Activated CD8-positive, alpha-beta T cell treated with anti-CD3 and anti-CD28 coated beads, Interleukin-2, amount 10 ng/mL, durations not matched to agents 7 days and 5 days (primary cell): ENCODE measurements at regions of chr10 and their contacts with region 1.

Region 1: GRCh38 chr10:101840741-101841453 is 2.7 kb downstream of the KCNIP2 start:
- DNase-seq: peak; percentile 82
- ATAC-seq: peak; percentile 74
- H3K4me3 Mint-ChIP-seq: peak overlapping the region; percentile 74
- H3K27ac Mint-ChIP-seq: no peak overlapping the region
- H3K4me1 Mint-ChIP-seq: peaks cover 43% of the 10 kb centered on the region
- H3K27me3 Mint-ChIP-seq: peaks cover 17% of the 10 kb centered on the region

Region 2: GRCh38 chr10:100743626-100744135 is 1097.2 kb before region 1 on chr10:
- CTCF ChIA-PET with region 1: no interaction called
- POLR2A ChIA-PET with region 1: no interaction called
- DNase-seq: peak; percentile 68
- ATAC-seq: peak; percentile 66
- H3K4me3 Mint-ChIP-seq: no peak overlapping the region
- H3K27ac Mint-ChIP-seq: no peak overlapping the region
- H3K4me1 Mint-ChIP-seq: peaks cover 26% of the 10 kb centered on the region
- H3K27me3 Mint-ChIP-seq: peaks cover 83% of the 10 kb centered on the region

Region 3: DNA sequence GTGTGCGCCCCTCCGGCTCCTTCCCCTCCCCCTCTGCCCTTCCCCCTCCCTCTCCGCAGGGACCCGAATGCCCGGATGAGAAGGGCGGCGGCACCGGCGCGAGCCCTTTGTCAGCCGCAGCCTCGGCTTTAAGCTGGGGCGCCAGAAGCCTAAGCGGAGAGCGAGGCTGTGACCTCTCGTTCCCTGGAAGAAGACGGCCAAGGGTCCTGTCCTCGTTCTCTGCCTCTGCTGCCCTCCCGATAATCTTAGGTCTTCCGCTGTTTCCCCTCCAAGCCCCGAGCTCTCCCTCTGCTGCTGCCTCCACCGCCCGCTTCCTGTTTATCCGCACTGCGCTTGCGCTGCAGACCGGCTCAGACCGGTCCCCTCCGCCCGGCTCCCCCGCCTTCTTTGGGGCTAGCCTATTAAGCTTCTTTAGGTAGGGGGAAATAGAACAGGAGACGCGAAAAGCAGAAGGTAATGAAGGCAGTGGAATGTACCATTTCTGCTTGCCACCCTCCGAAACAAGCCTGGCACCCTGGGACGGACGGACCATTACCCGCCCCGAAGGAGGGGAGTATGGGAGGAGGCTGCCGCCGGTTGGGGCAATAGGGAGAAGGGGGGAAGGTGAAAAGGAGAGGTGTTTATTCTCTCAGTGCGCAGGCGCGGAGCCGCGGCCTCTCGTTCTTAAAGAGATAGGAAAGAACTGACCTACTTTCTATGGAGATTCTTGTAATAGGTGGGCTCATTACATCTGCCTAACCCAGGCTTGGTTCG is 22.6 kb before region 1 on chr10 and contains the start of gene OGA:
- CTCF ChIA-PET with region 1: interaction called, 42 read pairs
- POLR2A ChIA-PET with region 1: interaction called, 32 read pairs
- DNase-seq: peak; percentile 99
- ATAC-seq: peak; percentile 93
- H3K4me3 Mint-ChIP-seq: peak within 1 kb of the TSS; percentile 96
- H3K27ac Mint-ChIP-seq: peak within 1 kb of the TSS; percentile 99
- H3K4me1 Mint-ChIP-seq: peaks cover 31% of the 10 kb centered on the region
- H3K27me3 Mint-ChIP-seq: no peaks in the 10 kb centered on the region
- total RNA-seq, gene OGA: 122 to 129 TPM

Region 4: DNA sequence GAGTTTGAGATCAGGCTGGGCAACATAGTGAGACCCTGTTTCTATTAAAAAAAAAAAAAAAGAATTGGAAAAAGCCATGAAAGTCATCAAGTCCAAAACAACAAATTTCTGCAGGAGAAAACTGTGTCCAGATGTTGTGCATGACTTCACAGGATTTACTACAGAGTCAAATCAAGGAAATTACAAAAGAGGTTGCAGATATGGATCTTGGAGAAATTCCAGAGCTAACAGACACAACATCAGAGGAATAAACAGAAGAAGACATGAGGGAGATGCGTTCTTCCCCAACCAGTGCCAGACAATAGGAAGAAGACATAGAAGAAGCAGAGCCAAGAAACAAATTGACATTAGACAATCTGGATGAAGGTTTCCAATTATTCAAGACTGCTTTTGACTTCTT is 27.0 kb after region 1 on chr10:
- CTCF ChIA-PET with region 1: interaction called, 12 read pairs
- POLR2A ChIA-PET with region 1: no interaction called
- DNase-seq: no peak
- ATAC-seq: no peak
- H3K4me3 Mint-ChIP-seq: no peak overlapping the region
- H3K27ac Mint-ChIP-seq: no peak overlapping the region
- H3K4me1 Mint-ChIP-seq: peaks cover 3% of the 10 kb centered on the region
- H3K27me3 Mint-ChIP-seq: no peaks in the 10 kb centered on the region

Region 5: GRCh38 chr10:101974091-101974971 is 133.4 kb after region 1 on chr10:
- CTCF ChIA-PET with region 1: interaction called, 11 read pairs
- POLR2A ChIA-PET with region 1: no interaction called
- DNase-seq: no peak
- ATAC-seq: no peak
- H3K4me3 Mint-ChIP-seq: peak overlapping the region; percentile 4
- H3K27ac Mint-ChIP-seq: peak overlapping the region; percentile 86
- H3K4me1 Mint-ChIP-seq: peaks cover 26% of the 10 kb centered on the region
- H3K27me3 Mint-ChIP-seq: no peaks in the 10 kb centered on the region

Region 6: GRCh38 chr10:102020938-102021337 is 180.0 kb after region 1 on chr10:
- CTCF ChIA-PET with region 1: interaction called, 25 read pairs
- POLR2A ChIA-PET with region 1: no interaction called
- DNase-seq: peak; percentile 54
- ATAC-seq: peak; percentile 53
- H3K4me3 Mint-ChIP-seq: no peak overlapping the region
- H3K27ac Mint-ChIP-seq: no peak overlapping the region
- H3K4me1 Mint-ChIP-seq: peaks cover 3% of the 10 kb centered on the region
- H3K27me3 Mint-ChIP-seq: no peaks in the 10 kb centered on the region

Region 7: DNA sequence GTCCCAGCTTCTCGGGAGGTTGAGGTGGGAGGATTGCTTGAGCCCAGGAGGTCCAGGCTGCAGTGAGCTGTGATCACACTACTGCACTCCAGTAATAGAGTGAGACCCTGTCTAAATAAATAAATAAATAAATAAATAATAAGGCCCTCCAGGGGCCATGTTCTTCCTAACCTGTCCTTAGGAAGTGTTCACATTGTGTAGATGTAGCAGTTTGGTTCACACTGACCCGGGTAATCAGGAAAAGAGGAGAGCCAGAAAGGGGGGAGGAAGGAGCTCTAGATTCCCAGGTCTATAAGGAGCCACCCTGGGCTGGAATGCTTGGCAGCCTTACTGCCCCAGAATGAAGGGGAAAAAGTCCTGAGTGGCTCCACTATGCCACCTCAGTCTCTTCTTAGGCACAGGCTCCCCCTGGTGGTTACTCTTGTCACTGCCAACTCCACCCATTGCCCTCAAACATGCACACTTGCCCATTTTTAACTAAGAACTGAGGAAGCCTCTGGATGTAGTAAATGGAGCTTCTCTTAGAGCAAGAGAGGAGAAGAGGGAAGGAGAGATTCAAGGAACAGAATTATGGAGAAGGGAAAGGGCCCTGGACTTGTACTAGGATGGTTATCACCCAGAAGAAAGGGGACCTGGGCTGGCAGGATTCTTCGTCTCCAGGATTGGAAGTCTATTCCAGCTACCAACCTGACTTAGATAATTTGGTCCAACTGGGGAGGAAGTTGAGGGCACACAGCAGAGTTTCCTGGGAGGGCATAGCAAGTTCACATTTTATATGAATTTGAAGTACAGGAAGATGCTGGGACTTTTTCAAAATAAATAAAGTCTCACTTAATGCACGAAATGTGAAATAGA is 232.0 kb after region 1 on chr10:
- CTCF ChIA-PET with region 1: interaction called, 45 read pairs
- POLR2A ChIA-PET with region 1: interaction called, 4 read pairs
- DNase-seq: peak; percentile 87
- ATAC-seq: peak; percentile 95
- H3K4me3 Mint-ChIP-seq: no peak overlapping the region
- H3K27ac Mint-ChIP-seq: no peak overlapping the region
- H3K4me1 Mint-ChIP-seq: peaks cover under 1% of the 10 kb centered on the region
- H3K27me3 Mint-ChIP-seq: no peaks in the 10 kb centered on the region